CD4-positive, alpha-beta T cell (primary cell): ENCODE measurements at regions of chr6 and their contacts with region 1.

Region 1: GRCh38 chr6:125956506-125957390 is at the start of gene HINT3:
- DNase-seq: peak; percentile 96 to 99 (median 98)
- ATAC-seq: peak; percentile 86
- H3K4me3 ChIP-seq: peak within 1 kb of the TSS; percentile 86
- H3K4me3 Mint-ChIP-seq: no peak within 1 kb of the TSS
- H3K27ac ChIP-seq: peak within 1 kb of the TSS; percentile 94 to 95
- H3K27ac Mint-ChIP-seq: no peak within 1 kb of the TSS
- H3K4me1 ChIP-seq: peaks cover 15% of the 10 kb centered on the region
- H3K4me1 Mint-ChIP-seq: peaks cover 22% of the 10 kb centered on the region
- H3K27me3 ChIP-seq: no peaks in the 10 kb centered on the region
- H3K27me3 Mint-ChIP-seq: no peaks in the 10 kb centered on the region
- CTCF ChIP-seq: peak; percentile 98
- total RNA-seq, gene HINT3: 10.4 TPM

Region 2: DNA sequence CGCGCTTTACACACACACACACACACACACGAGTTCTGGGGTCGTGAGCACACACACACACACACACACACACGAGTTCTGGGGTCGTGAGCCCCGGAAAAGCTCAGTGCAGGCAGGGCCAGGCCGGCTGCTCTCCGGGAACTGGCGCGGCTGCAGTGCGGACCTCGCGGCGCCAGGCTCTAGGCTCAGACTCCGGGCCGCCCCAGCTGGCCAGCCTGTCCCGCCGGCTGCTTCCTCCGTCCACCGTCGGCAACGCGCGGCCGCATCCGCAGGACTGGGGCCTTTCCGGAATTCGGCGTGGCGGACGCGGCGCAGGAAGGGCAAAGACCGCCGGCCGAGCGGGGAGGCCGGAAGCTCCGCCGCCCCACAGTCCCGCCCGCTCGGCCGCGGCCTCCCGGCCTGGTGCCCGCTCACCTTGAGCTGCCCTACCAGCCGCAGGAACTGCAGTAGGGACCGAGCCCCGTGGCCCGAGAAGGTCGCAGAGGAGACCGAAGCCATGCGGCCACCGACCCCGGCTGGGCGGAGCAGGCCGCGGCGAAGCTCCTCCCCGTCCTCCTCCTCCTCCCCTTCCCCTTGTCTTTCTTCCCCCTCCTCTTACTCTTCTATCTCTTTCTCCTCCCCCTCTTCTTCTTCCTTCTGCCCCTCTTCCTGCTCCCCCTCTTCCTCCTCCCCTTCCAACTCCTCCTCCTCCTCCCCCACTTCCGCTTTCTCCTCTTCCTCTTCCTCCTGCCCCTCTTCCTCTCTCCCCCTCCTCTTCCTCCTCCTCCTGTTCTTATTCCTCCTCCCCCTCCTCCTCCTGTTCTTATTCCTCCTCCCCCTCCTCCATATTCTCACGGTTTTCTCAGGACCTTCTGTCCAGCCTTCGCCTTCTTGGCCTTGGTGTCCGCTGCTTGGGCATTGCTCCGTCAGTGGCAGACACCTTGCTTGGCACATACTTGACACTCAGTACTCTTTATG is 655.0 kb before region 1 on chr6 and contains the start of gene HDDC2:
- CTCF ChIA-PET with region 1: no interaction called
- POLR2A ChIA-PET with region 1: interaction called, 10 read pairs
- intact Hi-C with region 1: no loop called
- DNase-seq: peak in 13 of 14 experiments; percentile 9 to 67 (median 37)
- ATAC-seq: peak; percentile 33
- H3K4me3 ChIP-seq: peak within 1 kb of the TSS; percentile 64
- H3K4me3 Mint-ChIP-seq: peak within 1 kb of the TSS; percentile 91
- H3K27ac ChIP-seq: peak within 1 kb of the TSS; percentile 66 to 70
- H3K27ac Mint-ChIP-seq: peak within 1 kb of the TSS; percentile 90
- H3K4me1 ChIP-seq: peaks cover 32% of the 10 kb centered on the region
- H3K4me1 Mint-ChIP-seq: peaks cover 64% of the 10 kb centered on the region
- H3K27me3 ChIP-seq: no peaks in the 10 kb centered on the region
- H3K27me3 Mint-ChIP-seq: peaks cover 5% of the 10 kb centered on the region
- CTCF ChIP-seq: no peak
- total RNA-seq, gene HDDC2: 19.4 to 21.6 TPM

Region 3: GRCh38 chr6:125779924-125780539 is 176.7 kb before region 1 on chr6:
- CTCF ChIA-PET with region 1: interaction called, 23 read pairs
- POLR2A ChIA-PET with region 1: interaction called, 78 read pairs
- intact Hi-C with region 1: loop called (anchors 1 to 2 kb)
- DNase-seq: peak; percentile 72 to 96 (median 82)
- ATAC-seq: peak; percentile 76
- H3K4me3 ChIP-seq: peak overlapping the region; percentile 76
- H3K4me3 Mint-ChIP-seq: no peak overlapping the region
- H3K27ac ChIP-seq: peak overlapping the region; percentile 88 to 93
- H3K27ac Mint-ChIP-seq: no peak overlapping the region
- H3K4me1 ChIP-seq: peaks cover 3% of the 10 kb centered on the region
- H3K4me1 Mint-ChIP-seq: peaks cover 13% of the 10 kb centered on the region
- H3K27me3 ChIP-seq: no peaks in the 10 kb centered on the region
- H3K27me3 Mint-ChIP-seq: no peaks in the 10 kb centered on the region
- CTCF ChIP-seq: no peak

Region 4: DNA sequence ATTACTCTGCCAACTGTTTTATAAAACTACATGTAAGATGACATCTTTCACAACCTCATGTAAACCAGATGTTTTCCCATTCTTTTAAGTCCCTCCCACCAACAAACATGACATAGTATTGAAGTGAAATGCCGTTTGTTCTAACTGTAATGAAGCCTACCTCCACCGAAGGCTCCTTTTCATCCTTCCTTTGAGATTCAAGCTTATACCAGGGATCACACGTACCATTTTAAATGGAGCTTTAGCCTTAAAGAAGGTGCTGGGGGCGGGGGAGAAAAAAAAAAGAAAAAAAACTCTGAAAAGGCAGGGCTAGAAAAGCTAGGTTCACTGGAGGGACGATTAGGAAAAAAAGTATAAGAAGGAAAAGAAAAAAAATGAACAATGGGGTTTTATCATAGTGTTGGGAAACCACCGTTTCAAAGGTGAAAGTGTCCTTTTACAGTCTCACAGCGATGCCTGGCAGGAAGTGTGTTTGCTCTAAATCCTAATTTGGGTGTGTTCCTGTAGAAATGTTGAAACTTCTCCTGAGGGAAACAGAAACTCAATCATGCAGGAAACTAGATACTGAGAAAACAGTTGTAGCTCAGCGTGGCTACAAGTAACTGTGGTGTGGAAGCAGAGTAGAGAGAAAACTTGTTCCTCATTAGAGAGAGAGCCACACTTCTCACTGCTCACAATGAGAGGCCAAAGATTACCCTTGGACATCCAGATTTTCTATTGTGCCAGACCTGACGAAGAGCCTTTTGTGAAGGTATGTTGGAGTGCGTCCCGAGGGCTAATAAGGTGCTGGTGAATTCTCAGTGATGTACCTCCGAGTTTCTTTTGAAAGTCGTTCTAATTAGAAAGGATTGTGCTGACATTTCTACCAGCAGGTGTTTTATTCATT is 37.8 kb before region 1 on chr6:
- CTCF ChIA-PET with region 1: interaction called, 18 read pairs
- POLR2A ChIA-PET with region 1: interaction called, 8 read pairs
- intact Hi-C with region 1: loop called in 1 of 2 experiments (anchors 5 kb)
- DNase-seq: peak in 8 of 14 experiments; percentile 5 to 88 (median 26)
- ATAC-seq: peak; percentile 95
- H3K4me3 ChIP-seq: peak overlapping the region; percentile 30
- H3K4me3 Mint-ChIP-seq: peak overlapping the region; percentile 79
- H3K27ac ChIP-seq: peak overlapping the region; percentile 36 to 76
- H3K27ac Mint-ChIP-seq: peak overlapping the region; percentile 84
- H3K4me1 ChIP-seq: peaks cover 13% of the 10 kb centered on the region
- H3K4me1 Mint-ChIP-seq: peaks cover 33% of the 10 kb centered on the region
- H3K27me3 ChIP-seq: no peaks in the 10 kb centered on the region
- H3K27me3 Mint-ChIP-seq: no peaks in the 10 kb centered on the region
- CTCF ChIP-seq: no peak

Region 5: DNA sequence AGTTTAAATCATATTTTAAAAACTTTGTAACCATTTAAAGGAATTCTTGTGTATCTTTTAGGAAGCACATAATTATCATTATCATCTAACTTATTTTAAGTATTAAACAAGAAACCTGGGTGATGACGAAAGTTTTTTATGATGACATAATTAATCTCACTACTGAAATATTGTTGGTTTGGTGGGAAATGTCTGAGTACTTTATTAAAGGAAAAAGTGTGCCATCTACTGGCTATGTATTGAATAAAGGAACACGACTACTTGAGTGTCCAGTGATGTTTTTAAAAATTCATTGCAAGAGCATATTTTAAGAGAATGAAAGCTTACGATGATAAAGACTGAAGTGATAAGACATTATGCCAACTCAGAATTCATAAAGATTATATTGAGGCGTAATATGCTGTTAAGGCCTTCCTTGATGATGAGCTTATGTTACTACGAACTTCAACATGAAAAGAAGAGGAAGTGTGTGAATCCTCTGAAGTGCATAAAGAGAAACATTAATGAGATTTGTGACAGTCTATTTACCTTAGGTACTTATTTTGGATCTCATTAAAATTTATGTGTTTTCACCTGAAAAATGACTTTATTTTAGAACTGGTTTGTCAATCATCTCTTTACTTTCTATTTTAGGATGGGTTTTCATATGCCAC is 17.6 kb after region 1 on chr6:
- CTCF ChIA-PET with region 1: interaction called, 21 read pairs
- POLR2A ChIA-PET with region 1: interaction called, 15 read pairs
- intact Hi-C with region 1: no loop called
- DNase-seq: peak in 3 of 14 experiments; percentile 63 to 67 (median 65)
- ATAC-seq: peak; percentile 84
- H3K4me3 ChIP-seq: no peak overlapping the region
- H3K4me3 Mint-ChIP-seq: no peak overlapping the region
- H3K27ac ChIP-seq: no peak overlapping the region
- H3K27ac Mint-ChIP-seq: no peak overlapping the region
- H3K4me1 ChIP-seq: no peaks in the 10 kb centered on the region
- H3K4me1 Mint-ChIP-seq: peaks cover 16% of the 10 kb centered on the region
- H3K27me3 ChIP-seq: no peaks in the 10 kb centered on the region
- H3K27me3 Mint-ChIP-seq: no peaks in the 10 kb centered on the region
- CTCF ChIP-seq: peak; percentile 67